Gastrocnemius medialis (tissue), 4 donors: ENCODE measurements at regions of chr3 and their contacts with region 1.

Region 1: GRCh38 chr3:67551361-67552016 is 102.9 kb downstream of the SUCLG2 start:
- DNase-seq: peak; percentile 46 to 64
- ATAC-seq: peak; percentile 98 to 99
- H3K4me3 ChIP-seq: no peak overlapping the region
- H3K27ac ChIP-seq: peak overlapping the region; percentile 65 to 77 (median 74)
- H3K4me1 ChIP-seq: peaks cover 0 to 9% of the 10 kb centered on the region in 2 donors
- H3K27me3 ChIP-seq: no peaks in the 10 kb centered on the region
- CTCF ChIP-seq: no peak
- POLR2A ChIP-seq: peak in 1 of 2 donors; percentile 36

Region 2: DNA sequence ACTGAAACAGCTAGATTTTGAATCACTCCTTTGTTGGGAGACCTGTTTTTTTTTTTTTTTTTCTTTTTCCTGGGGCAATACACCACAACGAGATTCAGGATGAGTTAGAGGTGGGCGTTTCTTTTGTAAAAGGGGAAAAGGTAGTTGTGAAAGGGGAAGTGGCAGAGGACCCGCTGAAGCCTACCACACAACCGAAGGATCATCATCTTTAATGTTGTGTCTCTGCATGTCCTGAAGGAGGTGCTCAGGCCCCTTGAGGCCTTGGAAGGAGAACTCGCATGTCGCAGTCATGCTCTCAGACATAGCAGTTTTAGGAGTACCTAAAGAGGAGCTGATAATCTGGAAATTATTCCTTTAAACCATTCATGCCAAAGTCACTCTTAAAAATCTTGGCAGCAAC is 912.8 kb before region 1 on chr3:
- in situ Hi-C with region 1: no loop called
- intact Hi-C with region 1: no loop called
- DNase-seq: no peak
- ATAC-seq: no peak
- H3K4me3 ChIP-seq: no peak overlapping the region
- H3K27ac ChIP-seq: no peak overlapping the region
- H3K4me1 ChIP-seq: no peaks in the 10 kb centered on the region
- H3K27me3 ChIP-seq: no peaks in the 10 kb centered on the region
- CTCF ChIP-seq: no peak
- POLR2A ChIP-seq: no peak

Region 3: DNA sequence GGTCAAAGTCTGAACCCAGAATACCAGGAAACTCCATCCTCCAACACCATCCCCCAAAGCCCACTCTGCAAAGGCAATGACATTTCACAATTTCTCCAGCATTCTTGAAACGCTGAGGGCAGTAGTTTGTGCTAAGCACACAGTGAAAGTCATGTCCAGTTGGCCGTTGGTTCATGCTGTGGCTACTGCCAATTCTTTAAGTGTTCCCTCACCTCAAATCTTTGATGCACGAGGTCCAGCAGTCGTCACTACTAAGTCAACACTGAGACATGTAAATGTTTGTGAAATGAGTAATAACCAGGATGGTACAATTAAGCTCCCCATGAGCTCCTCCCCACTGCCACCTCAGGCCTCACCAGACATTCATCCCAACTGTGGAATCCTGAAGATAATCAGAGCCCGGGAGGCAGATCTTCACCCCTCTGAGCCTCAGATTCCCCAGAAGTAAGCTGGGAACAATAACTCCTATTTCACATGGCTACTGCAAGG is 95.9 kb after region 1 on chr3:
- in situ Hi-C with region 1: no loop called
- intact Hi-C with region 1: loop called (anchors 5 kb)
- DNase-seq: peak; percentile 52 to 68
- ATAC-seq: peak; percentile 87 to 94
- H3K4me3 ChIP-seq: no peak overlapping the region
- H3K27ac ChIP-seq: peak overlapping the region; percentile 47 to 74 (median 60)
- H3K4me1 ChIP-seq: peaks cover 43 to 51% of the 10 kb centered on the region in 2 donors
- H3K27me3 ChIP-seq: no peaks in the 10 kb centered on the region
- CTCF ChIP-seq: no peak
- POLR2A ChIP-seq: peak in 1 of 2 donors; percentile 31